ENCODE measurements at regions of chr9 and their contacts with region 1.

Region 1: GRCh38 chr9:19925817-19926503 is 137.1 kb upstream of the SLC24A2 start:
- DNase-seq: peak; percentile 74
- H3K4me3 ChIP-seq: peak overlapping the region; percentile 17 to 52 (median 26)
- H3K27ac ChIP-seq: no peak overlapping the region
- H3K4me1 ChIP-seq: peaks cover 5% of the 10 kb centered on the region
- H3K27me3 ChIP-seq: peaks cover 5 to 13% of the 10 kb centered on the region in 2 experiments
- CTCF ChIP-seq: peak; percentile 92 to 94
- POLR2A ChIP-seq: no peak

Region 2: DNA sequence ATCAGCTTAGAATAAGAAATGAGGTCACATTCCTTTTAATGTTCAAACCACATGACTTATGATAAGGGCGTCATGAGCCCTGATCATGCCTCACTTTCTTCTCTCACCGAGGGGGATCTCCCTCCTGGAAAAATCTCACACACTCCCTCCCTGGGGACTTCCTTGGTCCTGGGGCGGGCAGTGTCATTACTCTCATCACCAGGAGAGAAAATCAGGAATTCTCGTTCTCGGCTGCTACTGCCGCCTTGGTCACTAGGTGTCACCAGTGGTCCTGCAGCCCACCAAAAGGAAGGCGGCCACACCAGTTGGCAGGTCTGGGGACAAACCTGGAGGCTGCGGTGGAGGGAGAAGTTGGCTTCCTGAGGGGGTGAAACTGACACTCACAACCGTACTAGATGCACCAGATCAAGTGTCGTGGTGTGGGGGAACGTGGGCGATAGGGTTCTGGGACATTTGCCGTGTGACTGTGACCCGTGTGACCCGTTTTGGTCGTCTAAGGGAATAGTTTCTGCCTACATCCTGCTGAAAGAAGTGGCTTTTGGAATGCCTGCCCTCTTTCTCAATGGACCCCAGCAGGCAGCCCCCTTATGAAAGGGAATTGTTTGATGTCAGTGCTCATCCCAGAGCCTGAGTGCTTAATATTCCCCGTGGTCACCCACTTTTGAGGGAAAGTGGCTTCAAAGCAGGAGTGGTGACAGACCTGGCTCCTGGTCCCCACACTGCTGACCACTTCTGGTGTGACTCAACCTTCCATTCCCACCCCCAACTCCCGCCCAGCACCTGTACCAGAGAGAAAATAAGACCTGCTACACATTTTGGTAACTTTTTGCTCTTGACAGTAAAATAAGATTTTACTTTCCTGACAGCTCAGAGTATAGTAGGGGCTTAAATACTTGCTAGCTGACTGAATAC is 454.0 kb before region 1 on chr9:
- CTCF ChIA-PET with region 1: interaction called, 15 read pairs
- POLR2A ChIA-PET with region 1: no interaction called
- dilution Hi-C with region 1: no loop called
- intact Hi-C with region 1: loop called (anchors 1 kb)
- DNase-seq: peak; percentile 61
- H3K4me3 ChIP-seq: no peak overlapping the region
- H3K27ac ChIP-seq: no peak overlapping the region
- H3K4me1 ChIP-seq: no peaks in the 10 kb centered on the region
- H3K27me3 ChIP-seq: peaks cover 7 to 8% of the 10 kb centered on the region in 2 experiments
- CTCF ChIP-seq: peak; percentile 70 to 83
- POLR2A ChIP-seq: no peak

Region 3: DNA sequence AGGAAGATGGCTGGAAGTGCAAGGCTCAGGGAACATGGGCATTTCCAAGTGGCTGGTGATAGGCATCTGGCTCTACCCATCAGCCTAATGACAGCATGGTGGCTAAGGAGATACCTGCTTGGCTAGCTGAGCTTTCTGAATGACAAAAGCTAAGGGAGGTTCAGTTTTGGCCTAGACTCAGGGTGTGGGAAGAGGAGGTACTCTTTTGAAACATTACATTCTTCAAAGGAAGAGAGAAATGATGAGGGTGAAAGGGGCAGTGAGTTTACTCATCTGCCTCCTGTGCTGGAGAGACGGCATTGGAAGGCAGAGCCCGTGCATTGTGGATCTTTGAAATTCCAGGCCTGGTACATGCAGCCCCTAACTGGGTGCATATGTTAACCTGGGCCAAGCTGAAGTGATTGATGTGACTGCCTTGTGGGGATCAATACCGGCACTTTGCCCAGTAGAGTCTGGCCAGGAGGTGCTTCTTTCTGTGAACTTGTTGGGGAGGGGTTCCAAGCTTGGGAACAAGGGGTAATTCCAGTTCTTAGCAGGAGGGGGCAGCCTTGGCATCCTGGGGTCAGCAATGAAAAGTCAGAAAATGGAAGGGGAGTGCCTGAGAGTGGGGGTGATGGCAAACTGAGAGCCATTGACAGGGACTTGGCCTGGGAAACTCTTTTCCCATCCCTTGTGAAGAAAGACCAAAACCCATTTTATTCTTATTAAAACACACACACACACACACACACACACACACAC is 408.6 kb before region 1 on chr9:
- CTCF ChIA-PET with region 1: interaction called, 11 read pairs
- POLR2A ChIA-PET with region 1: no interaction called
- dilution Hi-C with region 1: no loop called
- intact Hi-C with region 1: no loop called
- DNase-seq: no peak
- H3K4me3 ChIP-seq: no peak overlapping the region
- H3K27ac ChIP-seq: no peak overlapping the region
- H3K4me1 ChIP-seq: no peaks in the 10 kb centered on the region
- H3K27me3 ChIP-seq: peaks cover 0 to 3% of the 10 kb centered on the region in 2 experiments
- CTCF ChIP-seq: peak; percentile 33 to 34
- POLR2A ChIP-seq: no peak

Region 4: DNA sequence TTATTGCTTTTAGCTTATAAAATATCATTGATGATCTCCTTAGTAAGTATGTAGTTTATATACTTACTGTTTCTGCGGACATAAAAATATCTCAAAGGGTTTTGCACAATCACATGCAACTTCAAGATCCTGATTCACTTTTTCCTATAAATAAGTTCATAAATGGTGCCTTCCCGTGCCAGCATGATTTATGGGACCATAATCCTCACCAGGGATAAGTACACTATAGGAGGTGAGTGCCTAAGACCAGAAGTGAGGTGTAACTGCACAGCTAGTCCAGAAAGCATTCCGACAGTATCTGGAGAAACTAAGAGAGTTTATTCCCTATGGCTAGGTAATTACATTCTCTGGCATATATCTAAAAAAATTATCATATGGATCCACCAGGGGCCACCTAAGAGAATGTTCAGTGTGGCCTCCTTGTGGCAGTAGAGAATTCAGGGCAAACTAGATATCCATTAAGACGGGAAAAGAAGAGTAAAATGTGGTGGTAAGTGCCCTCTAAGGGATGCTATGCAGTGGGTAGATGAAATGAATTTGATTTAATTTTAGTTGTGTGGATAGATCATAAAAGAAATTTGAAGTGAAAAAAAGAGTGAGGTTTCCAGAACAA is 265.4 kb after region 1 on chr9:
- CTCF ChIA-PET with region 1: interaction called, 3 read pairs
- POLR2A ChIA-PET with region 1: no interaction called
- dilution Hi-C with region 1: no loop called
- intact Hi-C with region 1: loop called (anchors 1 kb)
- DNase-seq: no peak
- H3K4me3 ChIP-seq: no peak overlapping the region
- H3K27ac ChIP-seq: no peak overlapping the region
- H3K4me1 ChIP-seq: no peaks in the 10 kb centered on the region
- H3K27me3 ChIP-seq: no peaks in the 10 kb centered on the region
- CTCF ChIP-seq: no peak
- POLR2A ChIP-seq: no peak

Region 5: DNA sequence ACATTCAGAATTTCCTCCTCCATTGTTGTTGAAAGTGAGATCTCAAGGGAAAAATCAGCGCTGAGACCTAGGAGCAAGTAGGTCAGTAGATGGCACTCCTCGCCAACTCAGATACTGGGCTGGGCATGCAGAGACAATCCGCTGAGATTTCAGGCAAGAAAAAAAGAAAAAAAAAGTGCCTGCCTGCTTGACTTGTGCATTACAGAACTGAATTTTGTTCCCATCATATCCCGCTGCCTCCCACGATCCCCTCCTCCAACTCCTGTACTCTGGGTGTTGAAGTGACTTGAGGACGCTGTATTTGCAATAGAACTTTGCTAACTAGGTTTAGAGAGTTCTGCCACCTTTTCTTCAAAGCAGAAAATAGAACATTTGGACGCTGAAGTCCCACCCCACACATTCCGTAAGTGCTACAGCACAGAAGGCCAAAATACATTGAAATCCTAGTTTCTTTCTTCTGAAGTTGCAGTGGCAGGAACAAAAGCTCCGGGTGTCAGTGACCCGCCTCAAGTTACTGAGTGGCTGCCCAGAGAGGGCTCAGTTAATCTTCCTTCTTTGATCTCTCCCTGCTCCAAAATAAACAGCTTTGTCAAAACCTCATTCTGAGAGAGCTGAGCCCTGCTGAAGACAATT is 430.6 kb after region 1 on chr9:
- CTCF ChIA-PET with region 1: interaction called, 5 read pairs
- POLR2A ChIA-PET with region 1: no interaction called
- dilution Hi-C with region 1: no loop called
- intact Hi-C with region 1: loop called (anchors 1 kb)
- DNase-seq: peak; percentile 96
- H3K4me3 ChIP-seq: peak overlapping the region in 2 of 3 experiments; percentile 13 to 53
- H3K27ac ChIP-seq: peak overlapping the region; percentile 32
- H3K4me1 ChIP-seq: peaks cover 19% of the 10 kb centered on the region
- H3K27me3 ChIP-seq: no peaks in the 10 kb centered on the region
- CTCF ChIP-seq: peak; percentile 66 to 82
- POLR2A ChIP-seq: no peak

Region 6: GRCh38 chr9:20622330-20623020 is 696.5 kb after region 1 on chr9 and contains the start of gene MLLT3:
- CTCF ChIA-PET with region 1: interaction called, 3 read pairs
- POLR2A ChIA-PET with region 1: no interaction called
- dilution Hi-C with region 1: no loop called
- intact Hi-C with region 1: loop called (anchors 1 kb)
- DNase-seq: peak; percentile 96
- H3K4me3 ChIP-seq: peak within 1 kb of the TSS; percentile 43 to 81 (median 66)
- H3K27ac ChIP-seq: peak within 1 kb of the TSS; percentile 33
- H3K4me1 ChIP-seq: peaks cover 30% of the 10 kb centered on the region
- H3K27me3 ChIP-seq: no peaks in the 10 kb centered on the region
- CTCF ChIP-seq: peak in 1 of 2 donors; percentile 9
- POLR2A ChIP-seq: no peak
- total RNA-seq, gene MLLT3: 10.0 and 11.1 TPM in 2 replicates

Region 7: DNA sequence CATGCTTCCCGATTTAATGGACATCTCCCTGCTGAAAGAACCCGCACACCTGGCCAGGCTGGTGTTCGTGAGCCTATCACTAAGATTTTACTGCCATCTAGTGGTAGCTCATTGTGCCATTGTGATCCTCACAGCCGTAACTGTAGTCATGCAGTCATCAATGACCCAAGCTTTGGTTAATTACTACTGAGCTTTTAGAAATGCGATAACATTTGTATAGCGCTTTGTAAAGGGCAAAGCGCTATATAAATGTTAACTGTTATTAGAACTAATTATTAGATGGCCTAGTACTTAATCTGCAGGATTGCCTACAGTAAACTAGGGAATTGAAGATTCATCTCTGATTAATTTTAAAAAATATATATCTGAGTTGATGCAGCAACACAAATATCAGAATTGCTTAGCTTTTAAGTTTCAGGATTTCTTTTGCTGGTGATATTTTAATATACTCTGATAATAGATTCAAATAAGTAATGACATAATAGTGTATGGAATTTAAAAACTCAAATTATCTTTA is 1015.3 kb after region 1 on chr9:
- CTCF ChIA-PET with region 1: interaction called, 13 read pairs
- POLR2A ChIA-PET with region 1: no interaction called
- dilution Hi-C with region 1: no loop called
- intact Hi-C with region 1: loop called (anchors 1 kb)
- DNase-seq: peak; percentile 74
- H3K4me3 ChIP-seq: no peak overlapping the region
- H3K27ac ChIP-seq: no peak overlapping the region
- H3K4me1 ChIP-seq: no peaks in the 10 kb centered on the region
- H3K27me3 ChIP-seq: no peaks in the 10 kb centered on the region
- CTCF ChIP-seq: peak; percentile 63 to 72
- POLR2A ChIP-seq: no peak